K562 (cell line): ENCODE measurements at regions of chr1 and their contacts with region 1.

Region 1: DNA sequence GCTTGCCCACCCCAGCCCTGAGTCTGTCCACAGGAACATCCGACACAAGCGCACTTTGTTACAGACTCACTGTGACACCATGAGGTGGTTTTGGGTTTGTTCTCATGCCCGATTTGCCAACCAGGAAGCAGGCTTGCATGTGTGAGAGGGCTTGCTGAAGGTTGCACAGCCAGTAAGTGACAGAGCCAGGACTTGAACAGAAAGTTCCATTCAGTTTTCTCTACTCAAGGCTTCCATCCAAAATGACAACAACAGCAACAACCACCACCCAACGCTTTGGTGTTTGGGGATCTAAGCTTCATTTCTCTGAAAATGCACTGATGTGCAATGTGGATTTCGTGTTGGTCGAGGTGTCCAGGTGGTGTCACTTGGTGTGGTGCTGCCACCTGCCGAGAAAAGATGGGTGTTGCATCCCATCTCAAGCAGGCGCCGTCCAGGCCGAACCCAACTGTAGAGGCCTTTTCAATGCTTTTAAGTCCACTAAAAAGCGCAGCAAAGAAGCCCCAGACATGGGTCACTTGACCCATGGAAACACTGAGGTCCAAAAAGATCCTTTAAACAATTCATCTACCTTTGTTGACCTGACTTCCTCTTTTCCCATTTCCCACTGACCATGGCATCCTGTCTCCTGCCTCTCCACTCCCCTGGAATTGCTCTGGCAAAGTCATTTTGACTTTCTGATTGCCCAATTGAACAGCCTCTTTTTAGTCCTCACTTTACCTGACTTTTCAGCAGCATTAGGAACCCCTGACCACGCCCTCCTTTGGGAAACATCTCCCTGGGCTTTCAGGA is 12.2 kb downstream of the CITED4 start:
- DNase-seq: peak; percentile 79 to 89 (median 80)
- ATAC-seq: peak; percentile 94
- H3K4me3 ChIP-seq: no peak overlapping the region
- H3K27ac ChIP-seq: no peak overlapping the region
- H3K4me1 ChIP-seq: peaks cover 6 to 18% of the 10 kb centered on the region in 2 experiments; a peak in 4 of 5 replicates
- H3K27me3 ChIP-seq: no peaks in the 10 kb centered on the region
- CTCF ChIP-seq: peak; percentile 92 to 99 (median 96)
- EP300 ChIP-seq: no peak
- POLR2A ChIP-seq: no peak
- RAD21 ChIP-seq: peak; percentile 90 to 97

Region 2: DNA sequence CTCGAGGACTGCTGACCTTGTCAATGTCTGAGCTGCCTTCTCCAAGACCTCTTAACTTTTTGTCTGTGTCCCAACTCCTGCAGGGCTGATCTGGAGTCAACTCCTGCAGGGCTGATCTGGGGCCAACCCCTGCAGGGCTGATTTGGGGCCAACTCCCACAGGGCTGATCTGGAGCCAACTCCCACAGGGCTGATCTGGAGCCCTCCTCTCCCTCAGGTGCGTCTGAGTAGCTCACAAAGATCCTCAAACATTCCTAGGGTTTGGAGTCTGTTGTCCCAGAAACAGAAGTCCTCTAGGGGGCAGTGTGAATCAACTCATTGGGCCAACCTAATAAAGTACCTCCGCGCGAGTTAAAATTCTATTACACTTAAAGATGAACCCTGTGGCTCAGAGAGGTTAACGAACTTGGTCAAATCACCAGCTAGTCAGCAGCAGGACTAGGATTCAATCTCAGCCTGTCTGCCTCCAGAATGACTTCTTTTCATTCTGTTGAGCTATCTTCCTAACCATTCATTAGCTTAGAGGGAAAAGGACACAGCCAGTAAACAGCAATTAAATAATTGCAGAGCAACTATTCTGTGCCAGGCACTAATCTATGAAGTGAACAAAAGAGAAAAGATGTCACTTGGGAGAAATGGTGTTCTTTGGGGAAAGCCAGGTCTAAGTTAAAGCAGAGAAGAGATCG is 706.0 kb before region 1 on chr1:
- CTCF ChIA-PET with region 1: interaction called, 3 read pairs
- POLR2A ChIA-PET with region 1: no interaction called
- in situ Hi-C with region 1: no loop called
- intact Hi-C with region 1: loop called (anchors 5 kb)
- DNase-seq: peak; percentile 65 to 86 (median 70)
- ATAC-seq: peak; percentile 97
- H3K4me3 ChIP-seq: no peak overlapping the region
- H3K27ac ChIP-seq: no peak overlapping the region
- H3K4me1 ChIP-seq: no peaks in the 10 kb centered on the region
- H3K27me3 ChIP-seq: peaks cover 0 to 3% of the 10 kb centered on the region in 2 experiments; a peak in 1 of 5 replicates
- CTCF ChIP-seq: peak; percentile 85 to 95 (median 85)
- EP300 ChIP-seq: no peak
- POLR2A ChIP-seq: no peak
- RAD21 ChIP-seq: peak; percentile 90 to 95

Region 3: GRCh38 chr1:40612345-40612831 is 237.6 kb before region 1 on chr1:
- CTCF ChIA-PET with region 1: interaction called, 27 read pairs
- POLR2A ChIA-PET with region 1: no interaction called
- in situ Hi-C with region 1: no loop called
- intact Hi-C with region 1: loop called (anchors 1 kb)
- DNase-seq: peak; percentile 74 to 83 (median 79)
- ATAC-seq: peak; percentile 99
- H3K4me3 ChIP-seq: no peak overlapping the region
- H3K27ac ChIP-seq: no peak overlapping the region
- H3K4me1 ChIP-seq: peaks cover 0 to 4% of the 10 kb centered on the region in 2 experiments; a peak in 2 of 5 replicates
- H3K27me3 ChIP-seq: peaks cover 0 to 14% of the 10 kb centered on the region in 2 experiments; a peak in 3 of 5 replicates
- CTCF ChIP-seq: peak; percentile 92 to 96 (median 94)
- EP300 ChIP-seq: no peak
- POLR2A ChIP-seq: no peak
- RAD21 ChIP-seq: peak; percentile 90 to 97

Region 4: GRCh38 chr1:40774266-40774998 is 75.6 kb before region 1 on chr1:
- CTCF ChIA-PET with region 1: interaction called, 53 read pairs
- POLR2A ChIA-PET with region 1: no interaction called
- in situ Hi-C with region 1: no loop called
- intact Hi-C with region 1: loop called (anchors 1 kb)
- DNase-seq: peak; percentile 77 to 87 (median 82)
- ATAC-seq: peak; percentile 96
- H3K4me3 ChIP-seq: no peak overlapping the region
- H3K27ac ChIP-seq: peak overlapping the region; percentile 49
- H3K4me1 ChIP-seq: peaks cover 0 to 14% of the 10 kb centered on the region in 2 experiments; a peak in 4 of 5 replicates
- H3K27me3 ChIP-seq: no peaks in the 10 kb centered on the region
- CTCF ChIP-seq: peak; percentile 93 to 98 (median 94)
- EP300 ChIP-seq: peak; percentile 51; the same call in 1 of the 2 replicates
- POLR2A ChIP-seq: no peak
- RAD21 ChIP-seq: peak; percentile 90 to 94

Region 5: DNA sequence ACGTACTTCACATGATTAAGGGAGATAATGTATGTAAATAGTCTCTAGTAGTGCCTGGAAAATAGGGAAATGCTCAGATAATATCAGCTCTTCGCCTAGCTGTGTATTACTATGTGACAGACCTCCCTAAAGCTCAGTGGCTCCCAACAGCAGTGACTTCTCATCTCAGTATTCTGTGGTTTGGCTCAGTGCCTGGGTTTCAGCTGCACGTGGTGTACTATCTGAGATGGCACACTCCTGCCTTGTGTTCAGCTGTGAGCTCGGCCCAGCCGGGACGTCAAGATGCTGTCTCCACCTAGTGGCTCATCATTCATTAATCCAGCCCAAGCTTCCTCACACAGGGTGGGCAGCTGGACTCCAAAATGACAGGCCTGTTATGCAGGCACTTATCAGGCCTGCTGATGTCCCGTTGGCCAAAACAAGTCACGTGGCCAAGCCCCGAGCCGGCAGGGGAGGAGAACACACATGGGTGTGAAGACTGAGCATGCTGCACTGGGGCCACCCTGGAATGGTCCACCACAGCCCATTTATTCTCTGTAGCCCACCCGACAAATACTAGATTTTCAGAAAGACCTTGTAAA is 153.7 kb after region 1 on chr1:
- CTCF ChIA-PET with region 1: interaction called, 16 read pairs
- POLR2A ChIA-PET with region 1: no interaction called
- in situ Hi-C with region 1: no loop called
- intact Hi-C with region 1: no loop called
- DNase-seq: peak; percentile 89 to 99 (median 93)
- ATAC-seq: peak; percentile 98
- H3K4me3 ChIP-seq: no peak overlapping the region
- H3K27ac ChIP-seq: no peak overlapping the region
- H3K4me1 ChIP-seq: peaks cover 13 to 17% of the 10 kb centered on the region in 2 experiments; a peak in 4 of 5 replicates
- H3K27me3 ChIP-seq: no peaks in the 10 kb centered on the region; a peak in 1 of 5 replicates
- CTCF ChIP-seq: peak; percentile 79 to 92 (median 88)
- EP300 ChIP-seq: peak; percentile 85
- POLR2A ChIP-seq: no peak
- RAD21 ChIP-seq: peak; percentile 70 to 80